SK-N-SH (cell line): ENCODE measurements at regions of chr6 and their contacts with region 1.

Region 1: DNA sequence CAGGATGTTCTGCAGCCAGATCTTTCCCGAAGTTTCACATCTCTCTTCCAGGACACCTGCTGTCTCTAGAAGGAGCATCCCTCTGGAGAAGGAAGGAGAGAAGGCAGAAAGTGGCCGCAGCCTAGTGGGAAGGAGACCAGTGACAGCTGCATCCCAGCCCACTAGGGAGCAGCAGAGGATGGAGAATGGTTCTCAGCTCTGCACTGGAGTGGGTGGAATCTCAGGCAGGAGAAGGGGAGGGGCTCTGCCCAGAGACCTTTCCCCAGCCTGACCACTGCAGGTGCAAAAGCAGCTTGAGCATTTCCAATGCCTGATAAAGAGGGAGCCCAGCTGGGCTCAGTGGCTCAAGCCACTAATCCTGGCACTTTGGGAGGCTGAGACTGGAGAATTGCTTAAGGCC is 32.3 kb downstream of the NCR2 start:
- DNase-seq: peak; percentile 85
- H3K4me3 ChIP-seq: no peak overlapping the region; a peak in 1 of 4 replicates
- H3K27ac ChIP-seq: no peak overlapping the region
- H3K4me1 ChIP-seq: peaks cover 0 to 2% of the 10 kb centered on the region in 2 experiments; a peak in 1 of 4 replicates
- H3K27me3 ChIP-seq: peaks cover 56% of the 10 kb centered on the region
- CTCF ChIP-seq: peak; percentile 75
- EP300 ChIP-seq: no peak
- RAD21 ChIP-seq: peak; percentile 93

Region 2: DNA sequence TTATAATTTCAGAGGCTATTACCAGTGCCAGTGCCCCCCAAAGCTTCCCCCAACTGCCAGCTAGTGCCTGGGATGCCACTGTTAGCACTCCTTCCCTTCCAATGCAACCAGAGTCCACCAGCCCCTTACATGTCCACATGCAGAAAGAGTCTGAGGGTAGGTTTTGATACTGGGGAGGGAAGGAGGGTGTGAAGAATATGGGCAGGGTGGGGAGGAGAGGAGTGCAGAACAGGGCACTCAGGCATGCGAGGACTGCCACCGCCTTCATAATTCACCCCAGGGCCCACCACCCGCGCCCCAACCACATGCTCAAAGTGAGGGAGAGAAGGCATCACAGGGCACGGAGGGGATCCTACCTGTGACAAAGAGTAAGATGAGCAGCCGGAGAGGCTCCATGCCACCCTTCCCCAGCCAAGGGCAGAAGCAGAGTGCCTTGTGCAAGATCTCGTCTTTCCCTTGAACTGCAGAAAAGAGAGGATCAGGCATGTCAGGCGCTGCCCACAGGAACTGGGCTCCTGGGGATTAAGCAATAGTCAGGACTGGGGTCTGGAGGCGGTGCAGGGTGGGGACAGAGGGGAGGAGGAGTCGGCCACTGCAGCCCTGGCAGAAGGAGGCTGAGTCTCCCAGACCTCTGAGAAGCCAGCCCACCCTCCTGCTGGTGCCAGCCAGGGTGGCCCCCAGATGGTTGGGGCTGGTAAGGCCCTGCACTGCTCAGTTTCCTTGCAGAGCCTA is 204.8 kb before region 1 on chr6 and contains the start of gene TREM2:
- CTCF ChIA-PET with region 1: no interaction called
- POLR2A ChIA-PET with region 1: no interaction called
- DNase-seq: no peak
- H3K4me3 ChIP-seq: no peak within 1 kb of the TSS
- H3K27ac ChIP-seq: no peak within 1 kb of the TSS
- H3K4me1 ChIP-seq: no peaks in the 10 kb centered on the region
- H3K27me3 ChIP-seq: no peaks in the 10 kb centered on the region
- CTCF ChIP-seq: no peak
- EP300 ChIP-seq: no peak
- RAD21 ChIP-seq: no peak
- polyA plus RNA-seq, gene TREM2: not detected in 2 replicates

Region 3: GRCh38 chr6:41379306-41379705 is 11.6 kb after region 1 on chr6:
- CTCF ChIA-PET with region 1: interaction called, 61 read pairs
- POLR2A ChIA-PET with region 1: no interaction called
- DNase-seq: no peak
- H3K4me3 ChIP-seq: no peak overlapping the region
- H3K27ac ChIP-seq: no peak overlapping the region
- H3K4me1 ChIP-seq: 0 out of 4 replicates have a peak, but pooled peaks cover 0 to 3% of the 10 kb centered on the region in 2 experiments
- H3K27me3 ChIP-seq: peaks cover 72% of the 10 kb centered on the region
- CTCF ChIP-seq: no peak
- EP300 ChIP-seq: no peak
- RAD21 ChIP-seq: no peak

Region 4: DNA sequence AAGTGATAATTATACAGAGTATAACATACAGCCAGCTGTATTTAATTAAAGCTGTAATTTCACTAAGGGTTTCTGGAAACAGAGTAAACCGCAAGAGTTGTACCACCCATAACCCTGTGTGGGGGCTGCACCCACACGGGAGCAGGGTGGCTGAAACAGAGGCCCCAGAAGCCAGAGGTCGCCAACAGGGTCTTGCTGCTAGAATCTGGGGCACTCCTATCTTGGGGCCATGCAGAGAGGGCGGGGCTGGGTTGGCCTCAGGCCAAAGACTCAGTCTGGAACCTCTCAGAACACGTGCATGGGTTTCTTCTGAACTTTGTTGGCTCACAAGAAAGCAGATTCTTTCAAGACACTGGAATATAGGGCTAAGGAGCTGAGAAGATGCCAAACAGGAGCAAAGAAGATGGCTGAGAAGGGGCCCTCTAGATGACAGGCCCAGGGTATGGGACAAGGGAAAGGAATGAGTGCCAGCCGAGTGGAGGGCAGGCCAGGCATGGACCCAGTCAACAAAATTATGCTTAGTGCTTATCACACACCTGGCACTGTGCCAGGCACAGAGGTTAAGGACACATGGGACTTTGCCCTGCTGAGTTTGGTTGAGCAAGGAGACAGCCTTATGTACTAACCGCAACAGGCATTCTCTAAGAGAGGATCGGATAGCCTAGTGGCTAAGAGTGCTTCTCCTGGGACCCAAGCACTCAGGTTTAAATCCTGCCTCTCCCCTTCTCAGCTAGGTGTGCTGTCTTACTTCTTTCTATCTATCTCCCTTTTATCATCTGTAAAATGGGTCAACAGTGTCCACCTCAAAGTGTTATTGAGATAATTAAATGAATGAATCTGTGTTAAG is 81.9 kb after region 1 on chr6:
- CTCF ChIA-PET with region 1: interaction called, 11 read pairs
- POLR2A ChIA-PET with region 1: no interaction called
- DNase-seq: no peak
- H3K4me3 ChIP-seq: no peak overlapping the region
- H3K27ac ChIP-seq: no peak overlapping the region; a peak in 1 of 4 replicates
- H3K4me1 ChIP-seq: peaks cover 0 to 20% of the 10 kb centered on the region in 2 experiments; a peak in 1 of 4 replicates
- H3K27me3 ChIP-seq: peaks cover 4% of the 10 kb centered on the region; the same call in 1 of the 2 replicates
- CTCF ChIP-seq: no peak
- EP300 ChIP-seq: no peak
- RAD21 ChIP-seq: no peak

Region 5: DNA sequence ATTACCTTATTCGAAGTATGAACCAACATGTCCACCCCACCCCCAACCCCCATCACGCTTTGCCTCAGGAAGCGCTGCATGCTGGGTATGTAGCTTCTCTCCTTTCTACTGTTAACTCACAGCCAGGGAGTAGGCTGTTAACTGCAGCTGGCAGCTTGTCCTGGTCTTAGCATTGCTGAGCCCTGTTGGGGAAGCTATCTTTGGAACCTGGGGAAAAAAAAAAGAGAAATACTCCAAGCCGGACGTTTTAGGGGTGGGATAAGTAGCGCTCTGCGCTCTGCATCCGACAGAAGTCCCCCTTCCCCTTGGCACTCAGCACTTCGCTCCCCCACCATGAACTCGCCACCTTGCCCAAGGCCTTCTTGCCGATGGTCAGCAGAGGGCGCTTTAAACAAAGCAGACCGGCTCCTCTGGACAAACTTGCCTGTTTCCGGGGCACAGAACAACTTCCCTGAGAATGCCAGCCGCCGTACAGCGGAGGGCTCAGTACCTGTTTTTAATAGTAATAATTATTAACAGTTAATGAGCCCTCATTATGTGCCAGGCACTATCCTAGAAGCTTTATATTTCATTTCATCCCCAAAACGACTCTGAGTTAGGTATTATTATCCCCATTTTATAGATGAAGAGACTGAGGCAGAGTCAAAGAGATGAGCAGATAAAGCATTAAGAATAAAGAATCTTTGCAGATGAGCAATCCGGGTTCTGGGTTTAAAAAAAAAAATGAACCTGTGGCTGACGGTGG is 235.3 kb after region 1 on chr6:
- CTCF ChIA-PET with region 1: interaction called, 151 read pairs
- POLR2A ChIA-PET with region 1: no interaction called
- DNase-seq: peak; percentile 90
- H3K4me3 ChIP-seq: peak overlapping the region; percentile 17 to 54; a peak in 3 of 4 replicates
- H3K27ac ChIP-seq: peak overlapping the region; percentile 3 to 36; a peak in 1 of 4 replicates
- H3K4me1 ChIP-seq: peaks cover 0 to 7% of the 10 kb centered on the region in 2 experiments; a peak in 1 of 4 replicates
- H3K27me3 ChIP-seq: no peaks in the 10 kb centered on the region
- CTCF ChIP-seq: peak; percentile 95
- EP300 ChIP-seq: no peak
- RAD21 ChIP-seq: peak; percentile 93

Region 6: DNA sequence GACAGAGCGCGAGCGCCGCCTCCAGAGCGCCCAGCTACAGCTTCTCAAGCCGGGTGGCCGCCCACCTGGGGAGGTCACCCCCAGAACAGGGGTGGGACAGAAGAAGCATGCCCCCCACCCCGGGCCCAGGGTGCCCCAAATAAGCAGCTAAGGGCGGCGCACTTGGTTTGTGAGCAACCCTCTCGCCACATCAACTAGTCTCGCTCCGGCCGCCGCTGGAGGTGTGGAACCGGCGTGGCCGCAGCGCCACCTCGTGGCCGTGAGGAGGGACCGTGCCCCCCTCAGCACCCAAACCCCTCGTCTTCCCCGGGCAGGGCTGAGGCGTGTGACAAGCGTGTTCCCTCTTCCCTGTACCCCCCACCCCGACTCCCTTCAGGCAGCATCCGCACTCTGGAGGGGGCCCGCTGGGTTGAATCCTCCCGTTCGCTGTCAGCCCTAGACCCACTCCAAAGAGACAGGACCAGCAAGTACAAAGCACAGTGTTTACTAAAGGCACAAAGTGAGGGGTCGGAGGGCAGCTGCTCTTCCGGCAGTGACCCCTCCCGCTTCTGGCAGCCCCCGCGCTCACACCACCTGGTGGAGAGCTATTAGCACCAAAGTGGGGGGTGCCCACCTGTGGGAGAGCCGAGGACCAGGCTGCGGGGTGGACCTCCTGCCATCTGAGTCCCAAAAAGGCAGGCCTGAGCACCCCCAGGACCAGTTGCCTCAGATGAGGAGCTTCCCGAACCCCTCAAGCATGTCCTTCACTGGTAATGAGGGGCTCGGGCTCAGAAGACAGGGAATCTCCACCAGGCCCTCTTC is 316.0 kb after region 1 on chr6:
- CTCF ChIA-PET with region 1: interaction called, 285 read pairs
- POLR2A ChIA-PET with region 1: no interaction called
- DNase-seq: peak; percentile 96
- H3K4me3 ChIP-seq: peak overlapping the region in 1 of 2 experiments; percentile 35; a peak in 1 of 4 replicates
- H3K27ac ChIP-seq: no peak overlapping the region
- H3K4me1 ChIP-seq: peaks cover 11 to 14% of the 10 kb centered on the region in 2 experiments; a peak in 3 of 4 replicates
- H3K27me3 ChIP-seq: no peaks in the 10 kb centered on the region
- CTCF ChIP-seq: peak; percentile 89
- EP300 ChIP-seq: no peak
- RAD21 ChIP-seq: peak; percentile 91

Region 7: DNA sequence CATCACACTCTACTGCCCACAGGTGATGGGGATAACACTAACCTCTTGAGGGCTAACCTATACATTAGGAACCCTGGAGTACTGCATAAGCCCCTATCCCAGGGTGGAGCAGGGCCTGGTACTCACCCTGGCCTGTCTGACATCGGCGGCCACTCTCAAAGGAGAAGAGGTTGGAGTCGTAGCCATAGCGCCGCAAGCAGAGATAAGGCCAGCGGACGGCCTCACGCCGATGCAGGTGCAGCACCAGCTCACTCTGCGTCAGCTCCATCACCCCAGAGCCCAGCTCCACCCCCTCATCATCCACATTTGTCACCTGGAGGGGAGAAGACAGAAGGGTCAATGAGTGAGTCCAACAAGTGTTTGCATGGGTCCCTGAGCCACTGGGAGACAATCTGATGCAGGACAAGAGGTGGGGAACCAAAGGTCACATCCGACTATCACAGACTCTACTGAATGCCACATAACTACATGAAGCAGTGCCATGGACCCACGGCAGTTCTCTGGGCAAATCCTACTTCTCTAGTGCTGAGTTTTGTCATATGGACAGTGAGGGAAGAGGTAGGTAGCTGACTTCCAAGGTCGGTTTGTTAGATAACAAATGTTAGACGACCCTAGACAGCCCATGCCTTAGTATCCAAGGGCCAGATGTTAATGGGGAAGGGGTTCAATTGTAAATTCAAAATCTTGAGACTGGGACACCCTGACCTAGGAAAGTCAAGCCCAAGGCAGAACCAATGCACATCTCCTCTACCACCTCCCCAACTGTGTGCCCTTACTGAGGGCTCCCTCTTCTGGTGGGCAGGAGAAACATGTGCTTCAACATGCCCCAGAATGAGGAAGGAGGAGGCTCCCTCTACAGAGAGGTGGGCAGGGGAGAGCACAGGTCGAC is 407.8 kb after region 1 on chr6:
- CTCF ChIA-PET with region 1: interaction called, 12 read pairs
- POLR2A ChIA-PET with region 1: no interaction called
- DNase-seq: peak; percentile 71
- H3K4me3 ChIP-seq: no peak overlapping the region; a peak in 1 of 4 replicates
- H3K27ac ChIP-seq: no peak overlapping the region
- H3K4me1 ChIP-seq: peaks cover 5 to 9% of the 10 kb centered on the region in 2 experiments; a peak in 2 of 4 replicates
- H3K27me3 ChIP-seq: no peaks in the 10 kb centered on the region
- CTCF ChIP-seq: peak; percentile 72
- EP300 ChIP-seq: no peak
- RAD21 ChIP-seq: peak; percentile 73

Region 8: DNA sequence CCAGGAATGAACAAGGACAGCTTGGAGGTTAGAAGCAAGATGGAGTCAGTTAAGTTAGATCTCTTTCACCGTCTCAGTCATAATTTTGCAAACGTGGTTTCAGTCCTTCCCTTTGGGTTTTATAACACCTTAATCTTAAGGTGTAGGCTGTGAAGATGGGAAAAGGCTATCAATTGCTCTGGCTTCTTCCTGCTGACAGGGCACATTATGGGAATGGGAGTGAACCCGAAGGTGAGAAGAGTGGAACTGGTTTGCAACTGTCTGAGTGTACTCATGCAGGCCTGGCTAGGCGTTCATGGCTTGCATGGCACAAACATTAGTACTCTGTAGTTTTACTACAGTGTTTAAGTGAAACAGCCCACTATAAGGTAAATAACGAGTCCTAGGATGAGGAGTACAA is 692.0 kb after region 1 on chr6:
- CTCF ChIA-PET with region 1: no interaction called
- POLR2A ChIA-PET with region 1: no interaction called
- DNase-seq: no peak
- H3K4me3 ChIP-seq: no peak overlapping the region
- H3K27ac ChIP-seq: no peak overlapping the region
- H3K4me1 ChIP-seq: no peaks in the 10 kb centered on the region
- H3K27me3 ChIP-seq: no peaks in the 10 kb centered on the region
- CTCF ChIP-seq: no peak
- EP300 ChIP-seq: no peak
- RAD21 ChIP-seq: no peak